ENCODE measurements at regions of chr19 and their contacts with region 1.

Region 1: GRCh38 chr19:38769635-38770211 is 3.6 kb downstream of the LGALS7 start:
- DNase-seq: peak; percentile 82 to 86
- H3K4me3 ChIP-seq: peak overlapping the region in 1 of 3 donors; percentile 24
- H3K27ac ChIP-seq: peak overlapping the region in 2 of 3 donors; percentile 36 to 56
- H3K4me1 ChIP-seq: peaks cover 8% of the 10 kb centered on the region in 2 donors
- H3K27me3 ChIP-seq: no peaks in the 10 kb centered on the region
- CTCF ChIP-seq: peak; percentile 55 to 89 (median 73)
- POLR2A ChIP-seq: peak in 1 of 2 donors; percentile 35

Region 2: DNA sequence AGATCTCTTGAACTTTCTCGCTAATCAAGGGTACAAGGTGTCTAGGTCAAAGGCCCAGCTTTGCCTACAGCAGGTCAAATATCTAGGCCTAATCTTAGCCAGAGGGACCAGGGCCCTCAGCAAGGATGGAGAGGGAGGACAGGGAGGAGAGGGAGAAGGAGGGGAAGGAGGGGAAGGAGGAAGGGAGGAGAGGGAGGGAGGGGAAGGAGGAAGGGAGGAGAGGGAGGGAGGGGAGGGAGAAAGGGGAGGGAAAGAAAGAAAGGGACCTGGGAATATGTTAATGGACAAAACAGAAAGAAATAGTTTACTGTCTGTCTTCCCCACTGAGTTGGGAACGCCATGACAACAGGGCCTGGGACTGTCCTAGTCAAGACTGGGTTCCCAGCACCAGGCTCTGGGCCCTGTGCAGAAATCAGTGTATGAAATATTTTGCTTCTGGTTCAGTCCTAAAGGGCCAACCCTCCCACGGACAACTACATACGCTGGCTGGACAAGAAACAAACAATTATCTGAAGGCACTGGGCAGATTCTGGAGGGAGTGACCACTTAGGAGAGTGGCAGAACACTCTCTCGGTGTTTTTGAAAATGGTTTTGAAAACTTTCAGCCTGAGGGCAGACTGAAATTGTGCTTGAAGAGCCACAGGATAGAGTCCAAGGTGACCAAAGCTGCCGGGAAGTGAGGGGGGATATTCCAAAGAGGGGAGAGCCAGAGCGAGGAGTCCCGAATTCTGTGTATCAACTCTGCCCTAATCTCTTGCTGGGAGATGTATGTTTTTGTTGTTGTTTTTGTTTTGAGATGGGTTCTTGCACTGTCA is 57.4 kb after region 1 on chr19:
- intact Hi-C with region 1: loop called (anchors 10 kb)
- DNase-seq: no peak
- H3K4me3 ChIP-seq: no peak overlapping the region
- H3K27ac ChIP-seq: no peak overlapping the region
- H3K4me1 ChIP-seq: peaks cover 2 to 20% of the 10 kb centered on the region in 2 donors
- H3K27me3 ChIP-seq: no peaks in the 10 kb centered on the region
- CTCF ChIP-seq: no peak
- POLR2A ChIP-seq: no peak

Measured in thyroid gland (tissue), 4 donors.